ENCODE measurements at regions of chr5 and their contacts with region 1.

Region 1: DNA sequence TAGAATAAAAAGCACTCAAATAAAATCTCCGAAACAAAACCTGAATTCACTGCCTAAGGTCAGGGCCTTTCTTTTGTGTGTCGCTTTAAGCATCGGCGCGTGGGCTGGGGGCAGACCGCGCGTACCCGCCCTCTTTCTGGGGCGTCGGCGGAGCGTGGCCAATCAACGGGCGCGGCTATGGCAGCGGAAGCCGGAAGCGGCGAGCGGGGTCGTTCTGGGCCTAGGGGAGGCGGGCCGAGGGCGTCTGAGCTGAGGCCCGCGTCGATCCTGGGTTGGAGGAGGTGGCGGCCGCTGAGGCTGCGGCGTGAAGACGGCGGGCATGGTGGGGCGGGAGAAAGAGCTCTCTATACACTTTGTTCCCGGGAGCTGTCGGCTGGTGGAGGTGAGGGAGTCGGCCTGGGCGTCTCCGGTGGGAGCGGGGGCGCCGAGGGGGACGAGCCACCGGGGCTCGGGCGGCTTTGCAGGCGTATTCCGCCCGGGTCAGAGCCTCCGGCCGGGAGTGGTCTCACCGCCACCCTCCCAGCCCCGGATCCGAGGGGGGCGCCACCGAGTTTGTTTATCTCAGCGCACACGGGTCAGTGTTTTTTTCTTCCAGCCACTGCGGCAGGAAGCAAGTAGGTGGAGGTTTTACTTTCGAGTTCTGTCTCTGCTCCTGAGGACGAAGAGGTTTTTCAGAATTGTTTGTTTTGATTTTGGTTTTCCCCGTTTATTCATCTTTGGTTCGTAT is at the start of gene MAT2B:
- DNase-seq: peak; percentile 94
- H3K4me3 Mint-ChIP-seq: peak within 1 kb of the TSS; percentile 87
- H3K27ac Mint-ChIP-seq: peak within 1 kb of the TSS; percentile 99
- H3K4me1 Mint-ChIP-seq: peaks cover 42% of the 10 kb centered on the region
- H3K27me3 Mint-ChIP-seq: no peaks in the 10 kb centered on the region
- total RNA-seq, gene MAT2B: 93.2 and 98.9 TPM in 2 replicates

Region 2: GRCh38 chr5:163306421-163306820 is 199.1 kb before region 1 on chr5:
- intact Hi-C with region 1: loop called (anchors 1 kb)
- DNase-seq: no peak
- H3K4me3 Mint-ChIP-seq: no peak overlapping the region
- H3K27ac Mint-ChIP-seq: no peak overlapping the region
- H3K4me1 Mint-ChIP-seq: peaks cover 17% of the 10 kb centered on the region
- H3K27me3 Mint-ChIP-seq: peaks cover 13% of the 10 kb centered on the region

Region 3: DNA sequence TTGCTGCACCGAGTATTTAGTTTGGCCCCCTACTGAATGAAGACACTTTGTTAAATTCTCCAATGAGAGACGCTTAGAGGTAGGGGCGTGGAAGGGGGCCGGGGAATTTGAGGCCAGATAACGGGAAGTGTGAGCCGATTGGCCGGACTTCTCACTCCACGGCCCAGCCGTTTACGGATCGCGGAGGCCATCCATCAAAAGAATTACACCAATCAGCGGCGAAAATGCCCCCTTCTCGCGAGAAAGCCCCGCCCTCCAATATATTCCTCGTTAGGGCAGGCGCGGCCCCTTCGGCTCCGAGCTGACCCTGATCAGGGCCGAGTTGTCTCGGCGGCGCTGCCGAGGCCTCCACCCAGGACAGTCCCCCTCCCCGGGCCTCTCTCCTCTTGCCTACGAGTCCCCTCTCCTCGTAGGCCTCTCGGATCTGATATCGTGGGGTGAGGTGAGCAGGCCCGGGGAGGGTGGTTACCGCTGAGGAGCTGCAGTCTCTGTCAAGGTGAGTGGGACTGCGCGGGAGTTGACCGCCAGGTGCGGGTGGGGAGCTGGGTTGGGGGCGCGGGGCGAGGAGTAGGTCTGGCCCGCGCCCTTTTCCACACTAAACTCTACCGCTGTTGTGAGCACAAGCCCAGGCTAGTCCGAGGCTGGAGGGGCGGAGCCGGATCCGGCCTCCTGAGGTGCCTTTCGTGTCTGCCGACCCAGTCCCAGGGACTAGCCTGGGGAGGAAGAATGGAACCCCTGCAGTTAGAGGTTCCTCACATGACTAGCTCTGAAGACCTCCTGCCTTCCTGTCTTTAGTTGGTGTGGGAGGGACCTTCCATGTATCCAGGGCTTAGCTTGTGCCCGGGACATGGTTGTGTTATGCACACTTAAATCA is 68.0 kb before region 1 on chr5 and contains the start of gene CCNG1:
- intact Hi-C with region 1: loop called (anchors 1 kb)
- DNase-seq: peak; percentile 89
- H3K4me3 Mint-ChIP-seq: peak within 1 kb of the TSS; percentile 92
- H3K27ac Mint-ChIP-seq: peak within 1 kb of the TSS; percentile 77
- H3K4me1 Mint-ChIP-seq: peaks cover 43% of the 10 kb centered on the region
- H3K27me3 Mint-ChIP-seq: peaks cover 6% of the 10 kb centered on the region
- total RNA-seq, gene CCNG1: 87.8 and 89.4 TPM in 2 replicates

Region 4: DNA sequence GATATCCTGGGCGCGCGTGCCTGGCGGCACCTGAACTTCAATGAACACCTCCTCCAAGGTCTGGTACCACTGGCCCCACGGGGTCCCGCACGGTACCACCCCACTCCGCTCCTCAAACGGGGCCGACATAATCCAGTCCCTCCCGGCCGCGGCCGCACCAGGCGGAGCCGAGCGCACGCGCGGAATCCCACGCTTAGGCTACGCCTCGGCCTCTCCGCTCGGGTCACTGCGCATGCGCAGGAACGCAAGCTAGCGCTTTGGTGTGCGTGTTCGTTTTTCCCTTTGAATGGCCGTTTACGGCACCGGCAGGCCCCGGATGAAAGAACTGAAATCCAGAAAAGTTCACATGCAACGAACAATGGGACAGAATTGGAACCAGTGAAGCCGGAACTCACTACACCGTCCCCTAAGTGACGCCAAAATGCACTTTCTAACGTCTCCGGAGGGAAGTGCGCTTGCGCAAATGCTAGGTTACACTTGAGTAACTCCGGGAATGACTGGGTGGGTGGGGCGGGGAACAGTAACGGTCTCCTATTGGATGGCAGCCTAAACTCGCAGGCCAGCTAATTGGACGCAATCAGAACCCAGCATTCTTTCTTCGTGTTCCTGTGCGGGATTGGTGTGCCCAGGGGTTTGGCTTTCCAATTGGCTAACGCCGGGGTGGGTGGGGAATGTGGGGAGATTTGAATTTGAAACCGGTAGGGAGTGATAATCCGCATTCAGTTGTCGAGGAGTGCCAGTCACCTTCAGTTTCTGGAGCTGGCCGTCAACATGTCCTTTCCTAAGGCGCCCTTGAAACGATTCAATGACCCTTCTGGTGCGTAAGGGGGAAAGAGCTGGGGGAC is 45.4 kb before region 1 on chr5 and contains the starts of genes HMMR and NUDCD2:
- intact Hi-C with region 1: loop called (anchors 1 kb)
- DNase-seq: peak; percentile 92
- H3K4me3 Mint-ChIP-seq: peak within 1 kb of the TSS; percentile 95
- H3K27ac Mint-ChIP-seq: peak within 1 kb of the TSS; percentile 99
- H3K4me1 Mint-ChIP-seq: peaks cover 46% of the 10 kb centered on the region
- H3K27me3 Mint-ChIP-seq: no peaks in the 10 kb centered on the region
- total RNA-seq, gene HMMR: 39.3 and 40.3 TPM in 2 replicates
- total RNA-seq, gene NUDCD2: 39.6 and 48.0 TPM in 2 replicates

Region 5: DNA sequence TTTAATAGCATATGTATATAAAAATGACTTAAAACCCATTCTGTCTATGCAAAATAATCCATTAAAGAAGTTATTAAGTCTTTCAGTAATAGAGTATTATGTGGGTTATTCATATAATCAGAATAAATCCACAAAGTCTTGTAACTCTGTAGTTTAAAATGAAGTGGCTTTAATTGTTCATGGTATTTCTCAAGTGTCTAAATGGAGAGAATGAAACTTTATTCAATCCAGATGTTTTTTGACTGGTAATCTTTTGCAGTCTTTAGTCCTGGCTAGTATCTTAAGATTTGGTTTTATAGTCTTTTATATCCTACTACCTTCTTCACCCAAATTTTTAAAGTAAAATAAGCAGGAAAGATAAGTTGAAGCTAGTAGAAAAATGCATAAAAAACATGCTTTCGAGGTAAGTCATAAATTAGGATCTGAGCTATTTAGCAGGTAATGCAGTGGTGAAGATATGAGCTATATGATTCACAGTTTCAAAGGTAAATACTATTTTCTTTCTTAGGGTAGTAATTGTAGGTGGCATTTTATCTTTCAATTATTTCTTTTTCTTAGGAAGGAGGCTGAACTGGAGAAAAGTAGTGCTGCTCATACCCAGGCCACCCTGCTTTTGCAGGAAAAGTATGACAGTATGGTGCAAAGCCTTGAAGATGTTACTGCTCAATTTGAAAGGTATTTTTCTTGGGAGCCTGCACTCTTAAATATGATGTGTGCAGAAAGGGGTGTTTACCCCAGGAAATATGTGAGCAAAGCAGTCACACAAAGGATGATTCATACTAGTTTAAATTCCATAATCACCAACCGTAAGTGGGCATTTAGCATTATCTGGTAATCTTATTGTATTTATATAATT is 27.2 kb before region 1 on chr5:
- intact Hi-C with region 1: loop called (anchors 2 kb)
- DNase-seq: no peak
- H3K4me3 Mint-ChIP-seq: no peak overlapping the region
- H3K27ac Mint-ChIP-seq: peak overlapping the region; percentile 28
- H3K4me1 Mint-ChIP-seq: peaks cover 15% of the 10 kb centered on the region
- H3K27me3 Mint-ChIP-seq: no peaks in the 10 kb centered on the region

Region 6: GRCh38 chr5:163489055-163489744 is 16.3 kb before region 1 on chr5:
- intact Hi-C with region 1: loop called (anchors 2 kb)
- DNase-seq: no peak
- H3K4me3 Mint-ChIP-seq: no peak overlapping the region
- H3K27ac Mint-ChIP-seq: peak overlapping the region; percentile 33
- H3K4me1 Mint-ChIP-seq: peaks cover 3% of the 10 kb centered on the region
- H3K27me3 Mint-ChIP-seq: no peaks in the 10 kb centered on the region

Region 7: DNA sequence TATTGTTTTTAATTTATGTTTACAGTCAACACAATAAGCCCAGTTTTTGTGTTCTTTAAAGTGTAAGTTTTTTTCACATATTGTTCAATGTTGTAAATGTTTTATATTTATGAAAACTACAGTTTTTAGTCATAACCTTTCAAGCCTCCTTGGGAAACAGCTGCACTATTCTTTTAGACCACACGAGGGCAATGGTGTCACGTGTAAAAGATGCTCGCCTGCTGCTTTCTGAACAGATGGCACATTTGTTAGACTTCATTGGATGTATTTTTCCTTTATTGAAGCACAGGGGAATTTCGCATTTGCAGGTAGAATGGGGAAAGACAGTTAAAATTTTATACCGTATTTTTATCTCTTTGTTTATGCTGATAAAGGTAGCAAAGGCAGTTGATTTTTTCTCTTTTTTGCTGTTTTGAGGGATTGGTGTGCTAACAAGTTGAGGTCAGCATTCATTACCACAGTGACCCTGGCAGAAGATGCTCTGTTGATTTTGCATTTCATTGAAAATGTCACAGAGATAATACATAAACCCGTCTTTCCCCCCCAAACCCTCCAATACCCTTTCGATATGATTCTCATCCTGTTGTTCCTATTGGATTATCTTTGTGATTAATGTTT is 58.9 kb after region 1 on chr5:
- intact Hi-C with region 1: loop called (anchors 2 kb)
- DNase-seq: peak; percentile 43
- H3K4me3 Mint-ChIP-seq: no peak overlapping the region
- H3K27ac Mint-ChIP-seq: no peak overlapping the region
- H3K4me1 Mint-ChIP-seq: peaks cover 18% of the 10 kb centered on the region
- H3K27me3 Mint-ChIP-seq: peaks cover 57% of the 10 kb centered on the region